Esophagus muscularis mucosa (tissue), 4 donors: ENCODE measurements at regions of chr5 and their contacts with region 1.

Region 1: GRCh38 chr5:180950291-180950949 is 38.2 kb upstream of the BTNL3 start:
- DNase-seq: no peak
- H3K4me3 ChIP-seq: no peak overlapping the region
- H3K27ac ChIP-seq: no peak overlapping the region
- H3K4me1 ChIP-seq: no peaks in the 10 kb centered on the region
- H3K27me3 ChIP-seq: no peaks in the 10 kb centered on the region
- CTCF ChIP-seq: no peak
- EP300 ChIP-seq: no peak
- POLR2A ChIP-seq: no peak

Region 2: GRCh38 chr5:181005791-181006190 is 55.4 kb after region 1 on chr5:
- intact Hi-C with region 1: loop called (anchors 2 kb)
- DNase-seq: no peak
- H3K4me3 ChIP-seq: no peak overlapping the region
- H3K27ac ChIP-seq: no peak overlapping the region
- H3K4me1 ChIP-seq: no peaks in the 10 kb centered on the region
- H3K27me3 ChIP-seq: peaks cover 0 to 17% (median 0%) of the 10 kb centered on the region in 4 donors
- CTCF ChIP-seq: no peak
- EP300 ChIP-seq: no peak
- POLR2A ChIP-seq: no peak

Region 3: GRCh38 chr5:181028032-181028819 is 77.8 kb after region 1 on chr5:
- intact Hi-C with region 1: no loop called
- DNase-seq: peak; percentile 55
- H3K4me3 ChIP-seq: no peak overlapping the region
- H3K27ac ChIP-seq: no peak overlapping the region
- H3K4me1 ChIP-seq: no peaks in the 10 kb centered on the region
- H3K27me3 ChIP-seq: peaks cover 0 to 37% (median 0%) of the 10 kb centered on the region in 4 donors
- CTCF ChIP-seq: no peak
- EP300 ChIP-seq: no peak
- POLR2A ChIP-seq: no peak

Region 4: GRCh38 chr5:181059297-181060230 is 109.1 kb after region 1 on chr5:
- intact Hi-C with region 1: no loop called
- DNase-seq: peak; percentile 75
- H3K4me3 ChIP-seq: peak overlapping the region in 1 of 4 donors; percentile 18
- H3K27ac ChIP-seq: no peak overlapping the region
- H3K4me1 ChIP-seq: peaks cover 0 to 9% (median 8%) of the 10 kb centered on the region in 4 donors
- H3K27me3 ChIP-seq: peaks cover 0 to 96% (median 27%) of the 10 kb centered on the region in 4 donors
- CTCF ChIP-seq: no peak
- EP300 ChIP-seq: no peak
- POLR2A ChIP-seq: no peak